ENCODE measurements at regions of chr14 and their contacts with region 1.

Region 1: GRCh38 chr14:105844810-105845724 is 318.7 kb downstream of the TMEM121 start:
- DNase-seq: no peak
- H3K4me3 ChIP-seq: no peak overlapping the region
- H3K4me3 Mint-ChIP-seq: peak overlapping the region in 1 of 2 donors; percentile 24
- H3K27ac ChIP-seq: no peak overlapping the region
- H3K27ac Mint-ChIP-seq: no peak overlapping the region
- H3K4me1 ChIP-seq: no peaks in the 10 kb centered on the region
- H3K4me1 Mint-ChIP-seq: no peaks in the 10 kb centered on the region
- H3K27me3 ChIP-seq: no peaks in the 10 kb centered on the region
- H3K27me3 Mint-ChIP-seq: peaks cover 0 to 11% (median 1%) of the 10 kb centered on the region in 3 donors
- CTCF ChIP-seq: no peak

Region 2: DNA sequence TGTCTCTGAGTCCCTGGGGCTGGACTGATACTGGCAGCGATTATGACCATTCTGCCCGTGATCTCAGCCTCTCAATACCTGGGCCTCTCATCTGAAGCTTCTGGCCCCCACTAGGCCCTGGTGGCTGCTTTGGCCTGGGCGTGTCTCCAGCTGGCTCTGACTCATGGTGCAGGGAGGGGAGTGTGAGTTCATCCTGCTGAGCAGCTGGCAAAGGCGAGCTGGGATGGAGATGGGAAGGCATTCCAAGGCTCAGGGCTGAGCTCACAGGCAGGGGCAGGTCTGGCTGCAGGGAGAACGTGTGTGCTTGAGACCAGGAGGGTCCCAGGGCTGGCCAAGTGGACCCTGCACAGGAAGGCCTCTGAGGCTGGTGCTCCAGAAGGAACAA is 96.9 kb before region 1 on chr14:
- intact Hi-C with region 1: loop called in 1 of 2 experiments (anchors 5 kb)
- DNase-seq: no peak
- H3K4me3 ChIP-seq: no peak overlapping the region
- H3K4me3 Mint-ChIP-seq: no peak overlapping the region
- H3K27ac ChIP-seq: no peak overlapping the region
- H3K27ac Mint-ChIP-seq: no peak overlapping the region
- H3K4me1 ChIP-seq: no peaks in the 10 kb centered on the region
- H3K4me1 Mint-ChIP-seq: no peaks in the 10 kb centered on the region
- H3K27me3 ChIP-seq: no peaks in the 10 kb centered on the region
- H3K27me3 Mint-ChIP-seq: peaks cover 0 to 3% (median 1%) of the 10 kb centered on the region in 3 donors
- CTCF ChIP-seq: no peak

Measured in CD14-positive monocyte (primary cell).